CD4-positive, alpha-beta memory T cell (primary cell): ENCODE measurements at regions of chr18 and their contacts with region 1.

Region 1: GRCh38 chr18:32092422-32093101 is 888 bp downstream of the RNF138 start:
- DNase-seq: peak; percentile 98 to 99 (median 99)
- H3K4me3 ChIP-seq: peak overlapping the region; percentile 91 to 96
- H3K4me3 Mint-ChIP-seq: peak overlapping the region; percentile 95 to 99 (median 98)
- H3K27ac ChIP-seq: peak overlapping the region; percentile 98
- H3K27ac Mint-ChIP-seq: peak overlapping the region; percentile 98 to 99 (median 98)
- H3K4me1 ChIP-seq: peaks cover 40% of the 10 kb centered on the region
- H3K4me1 Mint-ChIP-seq: peaks cover 28 to 55% (median 41%) of the 10 kb centered on the region in 4 donors
- H3K27me3 ChIP-seq: no peaks in the 10 kb centered on the region
- H3K27me3 Mint-ChIP-seq: no peaks in the 10 kb centered on the region

Region 2: GRCh38 chr18:31685097-31686082 is 407.2 kb before region 1 on chr18:
- CTCF ChIA-PET with region 1: no interaction called
- POLR2A ChIA-PET with region 1: no interaction called
- intact Hi-C with region 1: loop called (anchors 10 kb)
- DNase-seq: peak; percentile 21 to 57 (median 31)
- H3K4me3 ChIP-seq: peak overlapping the region in 1 of 2 donors; percentile 39
- H3K4me3 Mint-ChIP-seq: peak overlapping the region; percentile 81 to 91 (median 86)
- H3K27ac ChIP-seq: no peak overlapping the region
- H3K27ac Mint-ChIP-seq: peak overlapping the region in 3 of 7 donors; percentile 30 to 77 (median 68)
- H3K4me1 ChIP-seq: no peaks in the 10 kb centered on the region
- H3K4me1 Mint-ChIP-seq: peaks cover 3 to 18% (median 11%) of the 10 kb centered on the region in 4 donors
- H3K27me3 ChIP-seq: peaks cover 5% of the 10 kb centered on the region
- H3K27me3 Mint-ChIP-seq: peaks cover 16 to 17% of the 10 kb centered on the region in 2 donors

Region 3: GRCh38 chr18:32040936-32041335 is 51.6 kb before region 1 on chr18:
- CTCF ChIA-PET with region 1: no interaction called
- POLR2A ChIA-PET with region 1: interaction called, 11 read pairs
- intact Hi-C with region 1: loop called (anchors 1 kb)
- DNase-seq: peak; percentile 74 to 78 (median 75)
- H3K4me3 ChIP-seq: no peak overlapping the region
- H3K4me3 Mint-ChIP-seq: peak overlapping the region; percentile 55 to 84 (median 70)
- H3K27ac ChIP-seq: peak overlapping the region; percentile 21
- H3K27ac Mint-ChIP-seq: peak overlapping the region; percentile 61 to 92 (median 87)
- H3K4me1 ChIP-seq: peaks cover 75% of the 10 kb centered on the region
- H3K4me1 Mint-ChIP-seq: peaks cover 48 to 75% (median 58%) of the 10 kb centered on the region in 4 donors
- H3K27me3 ChIP-seq: no peaks in the 10 kb centered on the region
- H3K27me3 Mint-ChIP-seq: no peaks in the 10 kb centered on the region

Region 4: GRCh38 chr18:32048507-32049091 is 44.0 kb before region 1 on chr18:
- CTCF ChIA-PET with region 1: interaction called, 3 read pairs
- POLR2A ChIA-PET with region 1: interaction called, 6 read pairs
- intact Hi-C with region 1: loop called (anchors 2 kb)
- DNase-seq: peak in 1 of 5 donors; percentile 19
- H3K4me3 ChIP-seq: no peak overlapping the region
- H3K4me3 Mint-ChIP-seq: peak overlapping the region in 7 of 8 donors; percentile 4 to 73 (median 44)
- H3K27ac ChIP-seq: peak overlapping the region; percentile 52
- H3K27ac Mint-ChIP-seq: peak overlapping the region in 6 of 7 donors; percentile 14 to 93 (median 90)
- H3K4me1 ChIP-seq: peaks cover 42% of the 10 kb centered on the region
- H3K4me1 Mint-ChIP-seq: peaks cover 30 to 54% (median 42%) of the 10 kb centered on the region in 4 donors
- H3K27me3 ChIP-seq: no peaks in the 10 kb centered on the region
- H3K27me3 Mint-ChIP-seq: no peaks in the 10 kb centered on the region

Region 5: GRCh38 chr18:32078845-32079244 is 13.7 kb before region 1 on chr18:
- CTCF ChIA-PET with region 1: no interaction called
- POLR2A ChIA-PET with region 1: interaction called, 10 read pairs
- intact Hi-C with region 1: no loop called
- DNase-seq: no peak
- H3K4me3 ChIP-seq: no peak overlapping the region
- H3K4me3 Mint-ChIP-seq: no peak overlapping the region
- H3K27ac ChIP-seq: no peak overlapping the region
- H3K27ac Mint-ChIP-seq: peak overlapping the region in 1 of 7 donors; percentile 73
- H3K4me1 ChIP-seq: peaks cover 10% of the 10 kb centered on the region
- H3K4me1 Mint-ChIP-seq: peaks cover 13 to 19% (median 16%) of the 10 kb centered on the region in 4 donors
- H3K27me3 ChIP-seq: no peaks in the 10 kb centered on the region
- H3K27me3 Mint-ChIP-seq: no peaks in the 10 kb centered on the region

Region 6: GRCh38 chr18:32138332-32138982 is 45.9 kb after region 1 on chr18:
- CTCF ChIA-PET with region 1: no interaction called
- POLR2A ChIA-PET with region 1: no interaction called
- intact Hi-C with region 1: no loop called
- DNase-seq: no peak
- H3K4me3 ChIP-seq: no peak overlapping the region
- H3K4me3 Mint-ChIP-seq: no peak overlapping the region
- H3K27ac ChIP-seq: no peak overlapping the region
- H3K27ac Mint-ChIP-seq: peak overlapping the region in 2 of 7 donors; percentile 25 to 77
- H3K4me1 ChIP-seq: peaks cover 6% of the 10 kb centered on the region
- H3K4me1 Mint-ChIP-seq: peaks cover 4 to 11% (median 5%) of the 10 kb centered on the region in 4 donors
- H3K27me3 ChIP-seq: no peaks in the 10 kb centered on the region
- H3K27me3 Mint-ChIP-seq: no peaks in the 10 kb centered on the region

Region 7: DNA sequence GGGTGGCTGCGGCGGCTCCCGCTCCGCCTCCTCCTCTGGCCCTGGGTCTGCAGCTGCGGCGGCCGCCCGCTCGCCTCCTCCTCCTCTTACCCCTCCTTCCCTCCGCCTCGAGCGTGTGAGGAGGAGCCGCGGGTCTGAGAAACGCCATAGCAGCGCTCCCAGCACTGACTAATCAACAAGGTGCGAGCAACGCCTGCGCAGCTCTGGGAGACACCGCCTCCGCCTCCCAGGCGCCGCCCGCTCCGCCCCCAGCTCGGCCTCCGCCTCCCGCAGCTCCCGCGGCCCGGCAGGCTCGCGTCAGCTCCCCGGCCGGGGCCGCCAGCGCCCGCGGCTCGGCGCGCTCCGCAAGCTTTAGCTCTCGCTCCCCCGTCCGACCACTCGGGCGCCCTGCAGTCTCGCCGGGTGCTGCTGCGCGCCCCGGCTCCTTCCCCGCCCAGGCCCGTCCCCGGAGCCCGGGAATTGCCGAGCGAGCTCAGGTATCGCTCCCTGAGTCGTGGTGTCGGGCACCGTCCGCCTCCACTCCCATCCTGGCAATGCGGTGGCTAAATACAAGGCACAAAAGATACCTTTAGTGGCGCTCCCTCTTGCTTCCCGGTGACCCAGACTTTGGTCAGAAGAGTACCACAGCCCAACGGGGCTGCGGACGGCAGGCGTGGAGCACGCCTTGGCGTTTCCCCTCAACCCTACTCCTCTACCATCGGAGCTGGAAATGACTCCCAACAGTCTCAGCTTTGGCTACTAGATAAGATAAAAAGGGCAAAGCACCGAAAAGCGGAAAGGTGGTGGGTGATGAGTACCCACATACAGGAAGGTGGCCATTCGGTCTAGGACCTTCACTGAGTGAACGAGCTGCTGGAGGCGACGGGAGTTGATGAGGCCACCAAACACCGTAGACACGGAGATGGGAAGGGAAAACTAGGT is 378.4 kb after region 1 on chr18 and contains the start of gene GAREM1:
- CTCF ChIA-PET with region 1: no interaction called
- POLR2A ChIA-PET with region 1: no interaction called
- intact Hi-C with region 1: loop called (anchors 2 kb)
- DNase-seq: peak; percentile 74 to 83 (median 78)
- H3K4me3 ChIP-seq: peak within 1 kb of the TSS; percentile 24 to 52
- H3K4me3 Mint-ChIP-seq: peak within 1 kb of the TSS; percentile 82 to 91 (median 88)
- H3K27ac ChIP-seq: no peak within 1 kb of the TSS
- H3K27ac Mint-ChIP-seq: peak within 1 kb of the TSS in 6 of 7 donors; percentile 45 to 88 (median 85)
- H3K4me1 ChIP-seq: peaks cover 33% of the 10 kb centered on the region
- H3K4me1 Mint-ChIP-seq: peaks cover 16 to 42% (median 30%) of the 10 kb centered on the region in 4 donors
- H3K27me3 ChIP-seq: peaks cover 8% of the 10 kb centered on the region
- H3K27me3 Mint-ChIP-seq: peaks cover 25 to 28% of the 10 kb centered on the region in 2 donors
- total RNA-seq, gene GAREM1: 0.28 to 0.52 TPM

Region 8: GRCh38 chr18:32481456-32481855 is 388.9 kb after region 1 on chr18:
- CTCF ChIA-PET with region 1: no interaction called
- POLR2A ChIA-PET with region 1: no interaction called
- intact Hi-C with region 1: no loop called
- DNase-seq: no peak
- H3K4me3 ChIP-seq: no peak overlapping the region
- H3K4me3 Mint-ChIP-seq: no peak overlapping the region
- H3K27ac ChIP-seq: no peak overlapping the region
- H3K27ac Mint-ChIP-seq: no peak overlapping the region
- H3K4me1 ChIP-seq: no peaks in the 10 kb centered on the region
- H3K4me1 Mint-ChIP-seq: peaks cover 0 to 1% (median 0%) of the 10 kb centered on the region in 4 donors
- H3K27me3 ChIP-seq: no peaks in the 10 kb centered on the region
- H3K27me3 Mint-ChIP-seq: peaks cover 7 to 10% of the 10 kb centered on the region in 2 donors